ENCODE measurements at regions of chr17 and their contacts with region 1.

Region 1: DNA sequence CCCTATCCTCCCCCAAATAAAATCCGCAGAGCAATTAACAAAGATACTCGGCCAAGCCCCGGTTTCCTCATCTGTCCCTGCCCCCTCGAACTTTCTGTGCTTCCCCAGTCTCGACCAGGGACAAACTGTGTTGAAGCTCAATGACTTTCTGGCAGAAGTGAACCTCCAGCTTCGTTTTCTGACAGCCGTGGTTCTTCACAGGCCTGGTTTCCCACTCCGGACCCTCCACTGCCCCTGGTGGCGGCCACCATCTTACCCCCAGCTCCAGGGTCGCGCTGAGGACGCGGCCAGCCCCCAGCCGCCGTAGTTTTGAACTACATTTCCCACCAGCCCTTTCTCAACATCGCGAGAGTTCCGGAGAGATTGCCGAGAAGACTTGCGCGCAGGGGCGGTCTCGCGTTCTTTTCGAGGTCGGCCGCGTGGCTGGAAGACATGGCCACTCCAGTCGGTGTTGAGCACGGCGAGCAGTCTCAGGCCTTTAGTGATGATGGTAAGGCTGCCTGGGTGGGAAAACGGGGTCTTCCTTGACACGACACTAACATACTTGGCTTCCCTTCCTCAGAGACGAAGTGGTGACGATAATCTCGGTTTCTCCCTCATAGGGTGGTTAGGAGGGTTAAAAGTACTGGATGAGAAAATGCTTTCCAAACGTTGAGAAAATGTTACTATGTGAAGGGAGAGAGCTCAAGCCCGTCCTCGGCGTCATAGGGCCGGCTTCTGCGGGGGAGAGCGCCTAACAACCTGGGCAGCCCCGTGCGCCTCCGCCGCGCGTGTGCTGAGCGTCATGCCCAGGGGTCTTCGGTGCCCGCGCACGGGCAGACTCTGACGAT is 17.7 kb downstream of the PRCD start:
- DNase-seq: peak; percentile 97
- ATAC-seq: peak; percentile 94
- H3K4me3 Mint-ChIP-seq: peak overlapping the region; percentile 100
- H3K27ac Mint-ChIP-seq: peak overlapping the region; percentile 99
- H3K4me1 Mint-ChIP-seq: peaks cover 55% of the 10 kb centered on the region
- H3K27me3 Mint-ChIP-seq: no peaks in the 10 kb centered on the region

Region 2: GRCh38 chr17:76523084-76524037 is 34.2 kb before region 1 on chr17:
- CTCF ChIA-PET with region 1: interaction called, 42 read pairs
- POLR2A ChIA-PET with region 1: interaction called, 4 read pairs
- DNase-seq: peak; percentile 86
- ATAC-seq: peak; percentile 88
- H3K4me3 Mint-ChIP-seq: peak overlapping the region; percentile 51
- H3K27ac Mint-ChIP-seq: peak overlapping the region; percentile 65
- H3K4me1 Mint-ChIP-seq: peaks cover 28% of the 10 kb centered on the region
- H3K27me3 Mint-ChIP-seq: no peaks in the 10 kb centered on the region

Region 3: GRCh38 chr17:76547184-76547641 is 10.4 kb before region 1 on chr17:
- CTCF ChIA-PET with region 1: interaction called, 33 read pairs
- POLR2A ChIA-PET with region 1: interaction called, 8 read pairs
- DNase-seq: peak; percentile 80
- ATAC-seq: peak; percentile 95
- H3K4me3 Mint-ChIP-seq: no peak overlapping the region
- H3K27ac Mint-ChIP-seq: no peak overlapping the region
- H3K4me1 Mint-ChIP-seq: peaks cover 21% of the 10 kb centered on the region
- H3K27me3 Mint-ChIP-seq: peaks cover 8% of the 10 kb centered on the region

Region 4: GRCh38 chr17:76567634-76568432 is 10.2 kb after region 1 on chr17:
- CTCF ChIA-PET with region 1: interaction called, 17 read pairs
- POLR2A ChIA-PET with region 1: interaction called, 5 read pairs
- DNase-seq: no peak
- ATAC-seq: no peak
- H3K4me3 Mint-ChIP-seq: no peak overlapping the region
- H3K27ac Mint-ChIP-seq: no peak overlapping the region
- H3K4me1 Mint-ChIP-seq: peaks cover 32% of the 10 kb centered on the region
- H3K27me3 Mint-ChIP-seq: no peaks in the 10 kb centered on the region

Region 5: GRCh38 chr17:76612977-76613851 is 55.6 kb after region 1 on chr17:
- CTCF ChIA-PET with region 1: interaction called, 17 read pairs
- POLR2A ChIA-PET with region 1: interaction called, 3 read pairs
- DNase-seq: no peak
- ATAC-seq: no peak
- H3K4me3 Mint-ChIP-seq: no peak overlapping the region
- H3K27ac Mint-ChIP-seq: peak overlapping the region; percentile 22
- H3K4me1 Mint-ChIP-seq: peaks cover 7% of the 10 kb centered on the region
- H3K27me3 Mint-ChIP-seq: peaks cover 2% of the 10 kb centered on the region

Region 6: GRCh38 chr17:76671123-76671911 is 113.7 kb after region 1 on chr17:
- CTCF ChIA-PET with region 1: interaction called, 12 read pairs
- POLR2A ChIA-PET with region 1: interaction called, 12 read pairs
- DNase-seq: peak; percentile 100
- ATAC-seq: peak; percentile 99
- H3K4me3 Mint-ChIP-seq: peak overlapping the region; percentile 89
- H3K27ac Mint-ChIP-seq: peak overlapping the region; percentile 95
- H3K4me1 Mint-ChIP-seq: peaks cover 41% of the 10 kb centered on the region
- H3K27me3 Mint-ChIP-seq: peaks cover 5% of the 10 kb centered on the region

Measured in activated CD8-positive, alpha-beta T cell treated with anti-CD3 and anti-CD28 coated beads, Interleukin-2, amount 10 ng/mL, durations not matched to agents 7 days and 5 days (primary cell).